Activated T-helper 2 cell treated with anti-CD3 and anti-CD28 coated beads, Interferon-gamma antibody, Interleukin-2, Interleukin-4, amounts not matched to agents 10 μg/mL and 5 μg/mL and 100 μg/mL, durations not matched to agents 14 hours and 24 hours and 36 hours (primary cell): ENCODE measurements at regions of chr4 and their contacts with region 1.

Region 1: GRCh38 chr4:153432968-153433753 is 33.0 kb upstream of the TMEM131L start:
- DNase-seq: peak; percentile 76
- H3K4me3 Mint-ChIP-seq: peak overlapping the region; percentile 73
- H3K27ac Mint-ChIP-seq: peak overlapping the region; percentile 94
- H3K4me1 Mint-ChIP-seq: peaks cover 51% of the 10 kb centered on the region
- H3K27me3 Mint-ChIP-seq: no peaks in the 10 kb centered on the region

Region 2: GRCh38 chr4:153344131-153345010 is 88.8 kb before region 1 on chr4 and contains the start of gene MND1:
- intact Hi-C with region 1: loop called (anchors 1 kb)
- DNase-seq: peak; percentile 91
- H3K4me3 Mint-ChIP-seq: peak within 1 kb of the TSS; percentile 93
- H3K27ac Mint-ChIP-seq: peak within 1 kb of the TSS; percentile 87
- H3K4me1 Mint-ChIP-seq: peaks cover 40% of the 10 kb centered on the region
- H3K27me3 Mint-ChIP-seq: peaks cover 17% of the 10 kb centered on the region
- total RNA-seq, gene MND1: 15.4 and 17.8 TPM in 2 replicates

Region 3: DNA sequence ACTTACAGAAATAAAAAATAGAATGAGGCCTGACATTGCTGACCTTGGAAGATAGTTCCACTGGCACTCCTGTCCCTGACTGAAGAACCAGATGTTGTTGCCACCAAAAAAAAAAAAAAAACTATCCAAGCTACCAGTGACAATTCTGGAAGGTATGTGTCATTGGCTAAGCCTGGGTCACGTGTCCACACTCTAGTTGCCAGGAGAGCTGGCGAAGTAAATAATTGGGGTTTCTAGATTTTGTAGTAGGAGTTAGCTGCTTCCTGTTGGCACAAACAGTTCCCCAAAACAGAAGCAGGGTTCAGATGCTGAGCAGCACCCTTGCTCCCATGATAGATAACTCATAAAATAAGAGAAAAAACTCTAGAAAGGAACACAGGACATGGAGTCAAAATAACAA is 68.2 kb before region 1 on chr4:
- intact Hi-C with region 1: no loop called
- DNase-seq: no peak
- H3K4me3 Mint-ChIP-seq: no peak overlapping the region
- H3K27ac Mint-ChIP-seq: no peak overlapping the region
- H3K4me1 Mint-ChIP-seq: peaks cover 12% of the 10 kb centered on the region
- H3K27me3 Mint-ChIP-seq: no peaks in the 10 kb centered on the region

Region 4: GRCh38 chr4:153421941-153422340 is 11.2 kb before region 1 on chr4:
- intact Hi-C with region 1: loop called (anchors 1 kb)
- DNase-seq: no peak
- H3K4me3 Mint-ChIP-seq: no peak overlapping the region
- H3K27ac Mint-ChIP-seq: no peak overlapping the region
- H3K4me1 Mint-ChIP-seq: peaks cover 47% of the 10 kb centered on the region
- H3K27me3 Mint-ChIP-seq: no peaks in the 10 kb centered on the region

Region 5: GRCh38 chr4:153466081-153466948 is 33.2 kb after region 1 on chr4 and contains the start of gene TMEM131L:
- intact Hi-C with region 1: loop called (anchors 1 kb)
- DNase-seq: peak; percentile 66
- H3K4me3 Mint-ChIP-seq: peak within 1 kb of the TSS; percentile 82
- H3K27ac Mint-ChIP-seq: peak within 1 kb of the TSS; percentile 82
- H3K4me1 Mint-ChIP-seq: peaks cover 53% of the 10 kb centered on the region
- H3K27me3 Mint-ChIP-seq: no peaks in the 10 kb centered on the region
- total RNA-seq, gene TMEM131L: 28.1 and 29.7 TPM in 2 replicates

Region 6: GRCh38 chr4:153497988-153498967 is 65.1 kb after region 1 on chr4:
- intact Hi-C with region 1: loop called (anchors 1 kb)
- DNase-seq: no peak
- H3K4me3 Mint-ChIP-seq: peak overlapping the region; percentile 70
- H3K27ac Mint-ChIP-seq: peak overlapping the region; percentile 89
- H3K4me1 Mint-ChIP-seq: peaks cover 80% of the 10 kb centered on the region
- H3K27me3 Mint-ChIP-seq: no peaks in the 10 kb centered on the region

Region 7: GRCh38 chr4:153528705-153529485 is 95.7 kb after region 1 on chr4:
- intact Hi-C with region 1: loop called (anchors 1 kb)
- DNase-seq: no peak
- H3K4me3 Mint-ChIP-seq: peak overlapping the region; percentile 71
- H3K27ac Mint-ChIP-seq: peak overlapping the region; percentile 91
- H3K4me1 Mint-ChIP-seq: peaks cover 74% of the 10 kb centered on the region
- H3K27me3 Mint-ChIP-seq: no peaks in the 10 kb centered on the region

Region 8: DNA sequence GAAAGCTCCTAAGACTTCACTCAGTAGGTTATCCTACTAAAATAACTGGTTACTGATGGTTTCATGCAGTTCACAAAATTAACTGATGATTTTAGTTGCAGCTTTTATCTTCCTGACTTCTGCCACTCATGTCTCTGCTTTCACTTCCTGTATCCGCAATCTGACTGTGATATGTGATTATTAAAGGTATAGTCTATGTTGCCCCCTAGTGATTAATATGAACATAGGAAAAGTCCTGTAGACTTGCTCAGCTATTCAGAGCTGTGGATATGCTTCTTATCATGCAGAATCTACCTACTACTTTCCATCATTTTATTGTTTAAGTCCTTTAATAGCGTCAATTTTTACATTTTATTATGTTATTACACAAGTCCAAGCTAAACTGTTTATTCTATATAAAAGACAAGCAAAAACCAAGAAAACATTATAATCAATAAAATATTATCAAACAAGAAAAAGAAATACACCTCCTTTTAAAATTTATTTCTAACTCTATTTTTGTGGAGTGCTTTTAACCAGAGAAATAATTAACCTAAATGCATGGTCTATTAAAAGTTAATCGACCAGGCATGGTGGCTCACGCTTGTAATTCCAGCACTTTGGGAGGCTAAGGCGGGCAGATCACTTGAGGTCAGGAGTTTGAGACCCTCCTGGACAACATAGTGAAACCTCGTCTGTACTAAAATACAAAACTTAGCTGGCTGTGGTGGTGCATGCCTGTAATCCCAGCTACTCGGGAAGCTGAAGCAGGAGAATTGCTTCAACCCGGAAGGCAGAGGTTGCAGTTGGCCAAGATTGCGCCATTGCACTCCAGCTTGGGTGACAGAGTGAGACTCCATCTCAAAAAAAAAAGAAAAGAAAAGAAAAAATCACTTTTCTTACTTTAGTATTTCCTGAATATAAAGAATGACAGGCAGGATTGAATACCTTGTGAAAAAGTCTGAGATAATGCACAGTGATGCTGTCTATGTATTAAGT is 210.5 kb after region 1 on chr4:
- intact Hi-C with region 1: loop called (anchors 2 kb)
- DNase-seq: no peak
- H3K4me3 Mint-ChIP-seq: no peak overlapping the region
- H3K27ac Mint-ChIP-seq: no peak overlapping the region
- H3K4me1 Mint-ChIP-seq: peaks cover 20% of the 10 kb centered on the region
- H3K27me3 Mint-ChIP-seq: no peaks in the 10 kb centered on the region